Upper lobe of right lung (tissue), 1 donor: ENCODE measurements at regions of chr10 and their contacts with region 1.

Region 1: GRCh38 chr10:100433253-100434240 is 29.3 kb upstream of the WNT8B start:
- DNase-seq: peak; percentile 86
- ATAC-seq: peak; percentile 100
- H3K4me3 ChIP-seq: no peak overlapping the region
- H3K27ac ChIP-seq: no peak overlapping the region
- H3K4me1 ChIP-seq: no peaks in the 10 kb centered on the region
- H3K27me3 ChIP-seq: no peaks in the 10 kb centered on the region
- CTCF ChIP-seq: peak; percentile 99

Region 2: GRCh38 chr10:100341953-100342626 is 91.5 kb before region 1 on chr10:
- intact Hi-C with region 1: loop called (anchors 5 kb)
- DNase-seq: peak; percentile 67
- ATAC-seq: peak; percentile 70
- H3K4me3 ChIP-seq: no peak overlapping the region
- H3K27ac ChIP-seq: no peak overlapping the region
- H3K4me1 ChIP-seq: peaks cover 8% of the 10 kb centered on the region
- H3K27me3 ChIP-seq: no peaks in the 10 kb centered on the region
- CTCF ChIP-seq: peak; percentile 62

Region 3: GRCh38 chr10:100391163-100392002 is 42.2 kb before region 1 on chr10:
- intact Hi-C with region 1: no loop called
- DNase-seq: no peak
- ATAC-seq: no peak
- H3K4me3 ChIP-seq: no peak overlapping the region
- H3K27ac ChIP-seq: no peak overlapping the region
- H3K4me1 ChIP-seq: no peaks in the 10 kb centered on the region
- H3K27me3 ChIP-seq: no peaks in the 10 kb centered on the region
- CTCF ChIP-seq: no peak

Region 4: DNA sequence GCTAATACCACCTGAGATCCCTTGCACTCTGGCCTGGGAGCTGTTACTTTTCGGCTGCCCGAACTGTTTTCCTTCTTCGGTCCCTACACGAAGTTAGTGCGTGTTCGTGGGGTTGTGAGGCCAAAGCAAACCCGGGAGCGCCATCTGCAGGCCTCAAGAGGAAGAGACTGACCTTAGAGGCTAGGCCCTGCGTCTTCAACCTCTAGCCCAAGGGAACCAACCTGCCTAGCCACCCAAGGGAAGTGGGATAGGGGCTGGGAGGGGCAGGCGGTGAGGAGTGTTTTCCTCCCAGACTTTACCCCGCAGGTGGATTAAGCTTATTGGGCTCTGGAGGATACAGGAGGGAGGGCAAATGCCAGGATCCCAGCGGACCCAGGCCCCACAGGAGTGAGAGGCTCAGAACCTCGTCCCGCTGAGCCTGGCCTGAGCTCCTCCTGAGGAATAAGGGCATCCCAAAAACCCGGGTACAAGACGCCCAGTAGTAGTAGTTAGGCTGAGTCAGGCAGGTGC is 310.1 kb after region 1 on chr10:
- intact Hi-C with region 1: no loop called
- DNase-seq: no peak
- ATAC-seq: peak; percentile 83
- H3K4me3 ChIP-seq: no peak overlapping the region
- H3K27ac ChIP-seq: no peak overlapping the region
- H3K4me1 ChIP-seq: peaks cover 36% of the 10 kb centered on the region
- H3K27me3 ChIP-seq: peaks cover 98% of the 10 kb centered on the region
- CTCF ChIP-seq: peak; percentile 62